K562 (cell line): ENCODE measurements at regions of chr2 and their contacts with region 1.

Region 1: DNA sequence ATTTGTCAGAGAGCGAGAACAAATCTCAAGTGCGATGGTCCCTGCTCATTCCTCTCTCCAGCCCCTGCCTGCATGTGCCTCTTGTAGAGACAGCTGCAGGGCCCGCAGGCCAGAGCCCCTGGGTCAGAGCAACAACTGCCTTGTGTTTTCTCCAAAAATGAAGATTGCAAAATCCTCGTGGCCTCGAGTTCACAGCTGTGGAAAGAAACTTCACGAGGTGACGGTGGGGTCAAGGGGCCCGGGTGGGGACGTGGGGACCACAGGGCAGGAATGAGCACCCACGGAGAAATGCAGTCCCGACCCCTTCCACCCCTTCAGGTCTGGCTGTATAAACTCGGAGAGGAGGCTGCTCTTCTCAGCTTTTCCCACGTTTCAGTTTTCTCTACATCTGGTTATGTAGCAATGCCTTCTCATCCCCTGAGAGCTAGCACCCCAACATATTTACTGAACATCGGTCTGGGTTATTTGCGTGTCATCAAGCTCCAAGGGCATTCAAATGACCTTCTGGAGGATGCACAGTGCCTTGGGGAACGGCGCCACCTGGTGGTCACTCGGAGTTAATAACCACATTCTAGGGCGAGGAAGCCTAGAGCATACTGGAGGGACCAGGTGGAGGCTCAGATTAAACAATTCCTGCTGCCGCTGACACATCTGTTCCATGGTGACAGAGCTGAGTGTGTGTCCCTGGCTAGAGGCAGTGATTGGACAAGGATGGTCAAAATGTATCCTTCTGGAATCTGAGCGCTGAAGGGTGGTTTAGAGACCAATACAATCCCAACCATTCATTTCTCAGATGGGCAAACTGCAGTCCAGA is 91.4 kb upstream of the CYRIA start:
- DNase-seq: peak; percentile 75 to 82 (median 81)
- ATAC-seq: peak; percentile 98
- H3K4me3 ChIP-seq: no peak overlapping the region
- H3K27ac ChIP-seq: no peak overlapping the region
- H3K4me1 ChIP-seq: peaks cover 0 to 2% of the 10 kb centered on the region in 2 experiments; a peak in 2 of 5 replicates
- H3K27me3 ChIP-seq: peaks cover 7 to 15% of the 10 kb centered on the region in 2 experiments; a peak in 3 of 5 replicates
- CTCF ChIP-seq: peak; percentile 90 to 94 (median 91)
- EP300 ChIP-seq: no peak
- POLR2A ChIP-seq: no peak
- RAD21 ChIP-seq: peak; percentile 99

Region 2: DNA sequence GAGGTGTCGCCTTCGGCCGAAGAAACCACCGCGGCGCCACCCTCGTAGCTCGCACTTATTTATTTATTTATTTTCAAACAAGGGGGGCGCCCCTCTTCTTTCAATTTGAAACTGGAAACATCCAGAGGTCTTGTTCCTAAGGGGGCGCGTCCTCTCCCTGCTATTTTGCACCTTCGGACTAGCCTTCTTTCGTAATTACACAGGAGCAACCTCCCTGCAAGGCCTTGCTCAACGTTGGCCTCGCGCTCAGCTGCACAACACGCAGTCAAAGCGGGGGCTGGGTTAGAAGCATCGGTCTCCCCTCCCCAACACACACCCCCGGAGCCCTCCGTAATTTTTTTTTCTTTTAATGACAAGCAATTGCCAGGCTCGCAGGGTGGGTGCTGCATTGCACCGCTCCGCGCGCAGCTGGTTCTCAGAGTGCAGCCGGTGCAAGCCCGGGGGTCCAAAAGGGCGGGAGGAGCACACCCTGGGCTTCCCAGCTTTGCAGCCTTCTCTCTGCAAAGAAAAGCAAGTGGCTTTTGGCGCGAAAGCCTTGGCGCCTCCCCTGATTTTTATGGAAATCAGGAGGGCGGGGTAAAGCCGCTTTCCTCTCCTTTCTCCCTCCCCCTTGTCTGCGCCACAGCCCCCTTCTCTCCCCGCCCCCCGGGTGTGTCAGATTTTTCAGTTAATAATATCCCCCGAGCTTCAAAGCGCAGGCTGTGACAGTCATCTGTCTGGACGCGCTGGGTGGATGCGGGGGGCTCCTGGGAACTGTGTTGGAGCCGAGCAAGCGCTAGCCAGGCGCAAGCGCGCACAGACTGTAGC is 817.0 kb before region 1 on chr2 and contains the start of gene MYCN:
- CTCF ChIA-PET with region 1: interaction called, 5 read pairs
- POLR2A ChIA-PET with region 1: no interaction called
- in situ Hi-C with region 1: loop called (anchors 25 kb)
- intact Hi-C with region 1: loop called (anchors 10 kb)
- DNase-seq: peak in 1 of 4 experiments; percentile 12
- ATAC-seq: peak; percentile 60
- H3K4me3 ChIP-seq: no peak within 1 kb of the TSS
- H3K27ac ChIP-seq: no peak within 1 kb of the TSS
- H3K4me1 ChIP-seq: peaks cover 0 to 15% of the 10 kb centered on the region in 2 experiments; a peak in 2 of 5 replicates
- H3K27me3 ChIP-seq: peaks cover 10 to 40% of the 10 kb centered on the region in 2 experiments; a peak in 4 of 5 replicates
- CTCF ChIP-seq: peak; percentile 72 to 79 (median 77); a peak in 5 of 6 replicates
- EP300 ChIP-seq: no peak
- POLR2A ChIP-seq: no peak
- RAD21 ChIP-seq: peak; percentile 77 to 82
- polyA plus RNA-seq, gene MYCN: not detected

Region 3: DNA sequence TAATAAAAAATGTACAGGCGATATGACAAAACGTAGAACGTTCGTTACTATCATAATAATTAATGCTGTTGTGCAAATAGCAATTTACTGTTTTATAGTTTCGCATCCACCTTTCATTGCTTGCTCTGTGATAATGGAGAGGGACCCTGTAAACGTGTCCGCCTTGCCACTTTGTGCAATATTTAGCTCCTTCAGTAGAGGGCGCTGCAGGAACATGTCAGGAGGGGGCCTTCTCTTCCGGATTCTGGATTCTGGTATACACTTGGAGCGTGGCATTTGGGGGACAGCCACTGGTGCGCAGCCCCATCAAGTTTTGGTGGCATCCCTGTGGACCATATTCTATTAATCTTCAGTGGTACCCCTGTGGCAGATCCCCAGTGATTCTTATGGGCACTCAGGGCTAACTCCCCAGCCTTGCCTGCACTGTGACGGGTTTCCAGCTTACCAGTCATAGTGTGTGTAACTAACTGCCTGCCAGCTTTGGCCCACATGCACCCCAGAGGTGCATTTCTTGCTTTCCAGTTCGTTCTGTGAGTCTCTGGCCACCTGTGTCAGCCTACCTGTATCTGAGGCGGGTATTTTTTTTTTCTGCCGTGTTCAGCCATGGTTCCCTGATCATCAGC is 231.7 kb before region 1 on chr2:
- CTCF ChIA-PET with region 1: interaction called, 8 read pairs
- POLR2A ChIA-PET with region 1: no interaction called
- in situ Hi-C with region 1: loop called (anchors 10 kb)
- intact Hi-C with region 1: loop called (anchors 1 kb)
- DNase-seq: peak; percentile 75 to 81 (median 78)
- ATAC-seq: peak; percentile 97
- H3K4me3 ChIP-seq: no peak overlapping the region
- H3K27ac ChIP-seq: no peak overlapping the region
- H3K4me1 ChIP-seq: no peaks in the 10 kb centered on the region
- H3K27me3 ChIP-seq: peaks cover 7 to 18% of the 10 kb centered on the region in 2 experiments; a peak in 3 of 5 replicates
- CTCF ChIP-seq: peak; percentile 81 to 90 (median 84)
- EP300 ChIP-seq: no peak
- POLR2A ChIP-seq: no peak
- RAD21 ChIP-seq: peak; percentile 78 to 82

Region 4: GRCh38 chr2:16617282-16618261 is 139.5 kb before region 1 on chr2:
- CTCF ChIA-PET with region 1: interaction called, 65 read pairs
- POLR2A ChIA-PET with region 1: interaction called, 3 read pairs
- in situ Hi-C with region 1: loop called (anchors 5 kb)
- intact Hi-C with region 1: loop called (anchors 1 kb)
- DNase-seq: peak; percentile 24 to 58 (median 51)
- ATAC-seq: peak; percentile 61
- H3K4me3 ChIP-seq: no peak overlapping the region
- H3K27ac ChIP-seq: no peak overlapping the region
- H3K4me1 ChIP-seq: peaks cover 3 to 12% of the 10 kb centered on the region in 2 experiments; a peak in 3 of 5 replicates
- H3K27me3 ChIP-seq: no peaks in the 10 kb centered on the region
- CTCF ChIP-seq: peak; percentile 55 to 77 (median 64); a peak in 5 of 6 replicates
- EP300 ChIP-seq: no peak
- POLR2A ChIP-seq: no peak
- RAD21 ChIP-seq: peak; percentile 76 to 90

Region 5: GRCh38 chr2:16722677-16723076 is 34.4 kb before region 1 on chr2:
- CTCF ChIA-PET with region 1: no interaction called
- POLR2A ChIA-PET with region 1: no interaction called
- in situ Hi-C with region 1: no loop called
- intact Hi-C with region 1: loop called (anchors 5 kb)
- DNase-seq: no peak
- ATAC-seq: peak; percentile 72
- H3K4me3 ChIP-seq: no peak overlapping the region
- H3K27ac ChIP-seq: no peak overlapping the region
- H3K4me1 ChIP-seq: peaks cover 0 to 5% of the 10 kb centered on the region in 2 experiments; a peak in 3 of 5 replicates
- H3K27me3 ChIP-seq: peaks cover 11 to 16% of the 10 kb centered on the region in 2 experiments; a peak in 4 of 5 replicates
- CTCF ChIP-seq: peak; percentile 24 to 53 (median 41); a peak in 4 of 6 replicates
- EP300 ChIP-seq: no peak
- POLR2A ChIP-seq: no peak
- RAD21 ChIP-seq: peak; percentile 66 to 72

Region 6: GRCh38 chr2:16767789-16768476 is 10.9 kb after region 1 on chr2:
- CTCF ChIA-PET with region 1: no interaction called
- POLR2A ChIA-PET with region 1: no interaction called
- in situ Hi-C with region 1: no loop called
- intact Hi-C with region 1: no loop called
- DNase-seq: peak in 2 of 4 experiments; percentile 32 to 39
- ATAC-seq: peak; percentile 63
- H3K4me3 ChIP-seq: no peak overlapping the region
- H3K27ac ChIP-seq: no peak overlapping the region
- H3K4me1 ChIP-seq: peaks cover 0 to 6% of the 10 kb centered on the region in 2 experiments; a peak in 2 of 5 replicates
- H3K27me3 ChIP-seq: no peaks in the 10 kb centered on the region; a peak in 1 of 5 replicates
- CTCF ChIP-seq: no peak
- EP300 ChIP-seq: no peak; the same call in 1 of the 2 replicates
- POLR2A ChIP-seq: no peak
- RAD21 ChIP-seq: no peak